GM12878 (cell line): ENCODE measurements at regions of chr10 and their contacts with region 1.

Region 1: DNA sequence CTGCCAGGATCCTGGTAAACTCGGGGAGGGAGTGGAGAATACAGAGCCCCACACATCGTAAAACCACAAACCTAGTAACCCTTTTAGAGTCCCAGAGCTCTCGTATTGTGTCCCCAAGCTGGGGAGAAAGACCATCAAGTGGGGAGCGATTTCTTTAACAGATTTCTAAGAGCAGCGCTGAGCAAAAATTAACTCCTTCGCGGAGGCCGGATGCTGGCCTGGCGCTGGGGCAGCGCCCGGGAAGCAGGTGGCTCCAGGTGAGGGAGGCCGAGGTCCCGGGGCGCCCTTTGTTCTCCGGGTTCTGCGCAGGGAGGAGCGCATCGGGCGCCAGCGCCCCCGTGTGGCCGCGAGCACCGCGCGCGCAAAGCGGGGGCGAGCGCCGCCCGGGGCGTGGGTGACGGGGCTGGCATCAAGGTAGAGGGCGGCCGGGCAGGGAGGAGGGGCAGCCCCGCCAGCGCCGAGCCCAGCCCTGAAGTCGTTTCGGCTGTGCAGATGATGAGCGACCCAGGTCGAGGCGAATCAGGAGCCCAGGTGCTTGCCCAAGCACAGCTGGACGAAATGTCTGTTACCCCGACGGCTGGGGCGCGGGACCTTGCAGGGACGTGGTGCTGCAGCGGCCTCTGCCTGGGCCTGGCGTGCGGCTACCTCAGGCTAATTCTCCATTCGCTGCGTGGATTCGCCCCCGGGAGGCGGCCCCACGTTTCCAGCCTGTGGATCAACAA is 10.4 kb upstream of the FGFR2 start:
- DNase-seq: no peak
- ATAC-seq: peak; percentile 97
- H3K4me3 ChIP-seq: no peak overlapping the region
- H3K27ac ChIP-seq: no peak overlapping the region
- H3K4me1 ChIP-seq: no peaks in the 10 kb centered on the region
- H3K27me3 ChIP-seq: no peaks in the 10 kb centered on the region
- CTCF ChIP-seq: peak; percentile 59 to 74 (median 62); a peak in 5 of 6 replicates
- EP300 ChIP-seq: no peak
- POLR2A ChIP-seq: no peak
- RAD21 ChIP-seq: peak; percentile 65

Region 2: GRCh38 chr10:121171825-121172773 is 436.5 kb before region 1 on chr10:
- CTCF ChIA-PET with region 1: no interaction called
- POLR2A ChIA-PET with region 1: no interaction called
- RAD21 ChIA-PET with region 1: no interaction called
- SMC1A ChIA-PET with region 1: no interaction called
- in situ Hi-C with region 1: no loop called
- intact Hi-C with region 1: loop called (anchors 5 kb)
- DNase-seq: no peak
- ATAC-seq: no peak
- H3K4me3 ChIP-seq: no peak overlapping the region
- H3K27ac ChIP-seq: no peak overlapping the region
- H3K4me1 ChIP-seq: no peaks in the 10 kb centered on the region
- H3K27me3 ChIP-seq: no peaks in the 10 kb centered on the region
- CTCF ChIP-seq: no peak
- EP300 ChIP-seq: no peak
- POLR2A ChIP-seq: no peak
- RAD21 ChIP-seq: no peak

Region 3: DNA sequence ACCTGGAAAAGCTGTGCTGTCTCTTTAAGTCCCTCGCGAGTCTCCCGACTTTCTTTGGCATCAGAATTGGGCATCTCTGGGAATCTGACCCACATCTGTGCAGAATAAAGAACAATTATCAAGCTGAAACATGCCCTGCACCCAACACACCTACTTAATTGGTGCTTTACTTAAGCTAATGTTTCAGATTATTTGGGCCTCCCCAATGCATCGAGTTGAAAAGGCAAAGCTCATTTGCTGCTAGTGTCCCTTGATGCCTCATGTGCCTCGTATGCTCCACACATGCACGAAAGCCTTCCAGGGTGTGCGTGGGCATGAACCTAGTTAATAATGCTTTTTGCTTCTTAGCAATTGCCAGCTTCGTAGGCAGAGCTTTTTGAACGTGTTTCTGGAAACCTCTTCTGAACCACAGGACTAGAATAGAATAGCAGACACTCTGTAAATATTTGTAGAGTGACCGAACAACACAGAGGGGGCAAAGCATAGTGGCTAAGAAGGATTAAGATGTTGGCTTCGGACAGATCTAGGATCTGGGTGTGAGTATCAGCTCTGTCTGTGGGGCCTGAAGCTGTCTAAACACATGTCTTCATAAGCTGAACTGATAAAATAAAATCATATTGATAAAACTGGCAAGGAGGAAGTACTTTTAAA is 16.3 kb after region 1 on chr10:
- CTCF ChIA-PET with region 1: interaction called, 12 read pairs
- POLR2A ChIA-PET with region 1: no interaction called
- RAD21 ChIA-PET with region 1: no interaction called
- SMC1A ChIA-PET with region 1: no interaction called
- in situ Hi-C with region 1: no loop called
- intact Hi-C with region 1: no loop called
- DNase-seq: no peak
- ATAC-seq: no peak
- H3K4me3 ChIP-seq: no peak overlapping the region
- H3K27ac ChIP-seq: no peak overlapping the region
- H3K4me1 ChIP-seq: no peaks in the 10 kb centered on the region
- H3K27me3 ChIP-seq: no peaks in the 10 kb centered on the region
- CTCF ChIP-seq: no peak
- EP300 ChIP-seq: no peak
- POLR2A ChIP-seq: no peak
- RAD21 ChIP-seq: no peak